ENCODE measurements at regions of chr1 and their contacts with region 1.

Region 1: DNA sequence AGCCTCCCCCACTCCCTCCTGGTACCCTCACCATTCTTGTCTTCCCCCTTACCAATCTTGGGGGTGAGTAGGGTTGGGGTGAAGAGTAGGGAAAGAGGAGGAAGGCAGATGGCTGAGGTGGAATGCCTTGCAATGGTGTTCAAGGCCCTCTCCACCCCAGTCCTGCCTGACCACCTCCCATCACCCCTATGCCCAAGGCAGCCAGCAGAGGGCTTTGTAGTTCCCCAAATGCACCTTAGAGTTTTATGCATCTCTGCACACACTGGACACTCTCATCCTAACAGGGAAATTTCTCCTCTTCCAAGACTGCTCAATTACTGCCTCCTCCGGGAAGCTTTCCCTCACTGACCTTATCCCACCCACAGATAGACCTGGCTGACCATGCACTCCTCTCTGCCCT is 15.4 kb downstream of the KIF17 start:
- DNase-seq: no peak
- H3K4me3 ChIP-seq: no peak overlapping the region
- H3K4me1 ChIP-seq: peaks cover 9% of the 10 kb centered on the region
- H3K27me3 ChIP-seq: no peaks in the 10 kb centered on the region

Region 2: DNA sequence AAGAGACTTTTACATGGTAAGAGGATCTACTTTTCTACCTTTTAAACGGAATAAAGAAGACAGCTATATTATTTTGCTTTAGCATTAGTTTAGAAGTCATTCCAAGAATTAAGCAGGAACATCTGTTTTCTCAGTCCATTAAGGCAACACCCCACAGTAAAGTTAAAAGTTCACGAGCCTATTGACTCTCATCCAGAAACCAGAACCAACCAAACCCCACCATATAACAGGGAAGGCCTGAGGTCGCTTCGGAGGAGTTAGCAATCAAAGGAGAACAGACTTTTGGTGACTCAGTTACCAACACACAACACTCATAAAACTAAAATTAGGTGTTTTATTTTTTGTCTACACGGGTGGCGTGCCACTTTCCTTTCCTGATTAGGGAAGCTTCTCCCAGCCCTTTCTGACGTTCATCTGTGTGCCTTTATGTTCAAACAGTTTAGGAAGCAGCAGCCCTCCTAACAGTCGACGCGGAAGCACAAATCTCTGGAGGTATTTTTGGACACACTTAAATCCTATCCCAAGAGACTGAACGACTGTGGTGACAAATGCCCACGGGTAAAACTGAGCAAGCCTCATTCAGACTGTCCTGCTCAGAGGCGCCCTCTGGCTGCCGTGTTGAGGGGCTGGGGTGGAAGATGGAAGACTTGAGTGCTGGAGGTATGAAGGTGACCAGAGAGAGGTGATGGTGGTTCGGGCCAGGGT is 507.5 kb before region 1 on chr1:
- in situ Hi-C with region 1: no loop called
- DNase-seq: peak; percentile 40 to 76
- H3K4me3 ChIP-seq: no peak overlapping the region
- H3K4me1 ChIP-seq: no peaks in the 10 kb centered on the region
- H3K27me3 ChIP-seq: peaks cover 24% of the 10 kb centered on the region

Region 3: GRCh38 chr1:20597650-20598049 is 104.8 kb before region 1 on chr1:
- in situ Hi-C with region 1: no loop called
- DNase-seq: no peak
- H3K4me3 ChIP-seq: no peak overlapping the region
- H3K4me1 ChIP-seq: no peaks in the 10 kb centered on the region
- H3K27me3 ChIP-seq: no peaks in the 10 kb centered on the region

Region 4: GRCh38 chr1:20983297-20983889 is 281.0 kb after region 1 on chr1:
- in situ Hi-C with region 1: no loop called
- DNase-seq: no peak
- H3K4me3 ChIP-seq: no peak overlapping the region
- H3K4me1 ChIP-seq: no peaks in the 10 kb centered on the region
- H3K27me3 ChIP-seq: no peaks in the 10 kb centered on the region

Region 5: GRCh38 chr1:21184276-21184675 is 481.9 kb after region 1 on chr1:
- in situ Hi-C with region 1: loop called (anchors 5 kb)
- DNase-seq: no peak
- H3K4me3 ChIP-seq: no peak overlapping the region
- H3K4me1 ChIP-seq: no peaks in the 10 kb centered on the region
- H3K27me3 ChIP-seq: no peaks in the 10 kb centered on the region; the same call in 1 of the 2 replicates

Measured in HAP-1 (cell line).